Transverse colon (tissue), 4 donors: ENCODE measurements at regions of chr4 and their contacts with region 1.

Region 1: DNA sequence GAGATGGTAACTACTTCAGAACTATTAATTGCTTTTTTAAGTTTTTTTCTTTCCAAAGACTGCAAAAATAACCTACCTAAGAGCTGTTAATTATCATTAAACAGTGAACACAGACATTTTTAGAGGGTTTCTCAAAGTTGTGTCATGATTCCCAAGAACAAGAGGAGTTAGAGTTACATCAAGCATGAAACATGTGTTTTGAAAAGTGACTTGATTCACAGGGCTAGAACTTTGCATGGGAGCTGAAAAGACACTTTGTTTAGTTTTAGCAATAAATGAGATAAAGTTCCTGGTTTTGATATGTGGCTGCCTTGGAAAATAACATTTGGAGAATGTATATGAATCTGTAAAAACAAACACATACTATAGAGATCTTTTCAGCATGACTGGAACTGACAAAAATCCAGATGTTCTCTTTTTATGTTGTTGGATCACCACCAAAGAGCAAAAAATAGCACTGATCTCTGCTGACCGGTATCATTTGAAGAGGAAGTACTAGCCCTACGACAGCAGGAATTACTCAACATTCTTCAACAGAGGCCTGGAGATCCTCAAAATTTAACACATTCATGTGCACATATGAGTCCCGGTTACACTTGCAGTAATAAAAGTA is 173.0 kb upstream of the PCDH18 start:
- DNase-seq: no peak
- H3K4me3 ChIP-seq: no peak overlapping the region
- H3K27ac ChIP-seq: peak overlapping the region; percentile 60 to 76 (median 66)
- H3K4me1 ChIP-seq: peaks cover 0 to 10% (median 4%) of the 10 kb centered on the region in 4 donors
- H3K27me3 ChIP-seq: no peaks in the 10 kb centered on the region
- CTCF ChIP-seq: no peak
- EP300 ChIP-seq: peak; percentile 12
- POLR2A ChIP-seq: no peak

Region 2: GRCh38 chr4:137545461-137545861 is 159.8 kb before region 1 on chr4:
- in situ Hi-C with region 1: loop called in 1 of 4 experiments (anchors 10 kb)
- intact Hi-C with region 1: no loop called
- DNase-seq: no peak
- H3K4me3 ChIP-seq: no peak overlapping the region
- H3K27ac ChIP-seq: peak overlapping the region; percentile 36 to 59 (median 56)
- H3K4me1 ChIP-seq: peaks cover 0 to 3% (median 0%) of the 10 kb centered on the region in 4 donors
- H3K27me3 ChIP-seq: no peaks in the 10 kb centered on the region
- CTCF ChIP-seq: no peak
- EP300 ChIP-seq: no peak
- POLR2A ChIP-seq: no peak